H1 (cell line): ENCODE measurements at regions of chr14 and their contacts with region 1.

Region 1: DNA sequence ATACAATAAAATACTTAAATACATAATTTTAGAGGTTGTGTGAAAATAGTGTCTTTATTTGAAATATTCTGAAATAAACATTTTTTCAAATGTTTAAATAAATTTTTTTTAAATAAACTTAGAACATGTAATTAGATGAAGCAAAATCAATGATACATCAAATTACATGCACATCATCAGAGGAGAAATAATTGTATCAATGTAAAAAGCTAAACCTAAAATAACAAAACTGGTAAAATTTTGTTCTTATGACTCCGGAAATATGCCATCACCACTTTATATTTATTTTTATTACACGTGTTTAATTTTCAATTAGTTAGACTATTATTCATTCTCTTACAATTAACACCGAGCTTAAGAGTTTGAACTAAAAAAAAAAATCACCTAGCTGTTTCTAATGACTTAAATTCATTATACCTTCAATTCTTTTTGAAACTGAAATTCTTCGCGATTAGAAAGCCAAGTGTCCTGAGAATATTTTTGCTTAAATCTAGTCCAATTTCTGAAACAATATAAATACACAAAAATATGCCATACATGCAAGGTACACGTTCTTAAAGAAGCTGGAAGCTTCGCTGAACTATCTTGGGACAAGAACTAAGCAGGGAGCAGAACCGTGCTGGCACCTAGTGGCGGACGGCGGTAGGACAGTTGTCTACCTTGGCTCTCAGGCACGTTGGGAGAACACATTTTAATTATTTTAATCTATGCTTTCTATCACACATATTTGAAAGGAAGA is 230.5 kb downstream of the SLC25A21 start:
- DNase-seq: peak; percentile 27 to 92
- H3K4me3 ChIP-seq: no peak overlapping the region
- H3K27ac ChIP-seq: no peak overlapping the region
- H3K4me1 ChIP-seq: no peaks in the 10 kb centered on the region
- H3K27me3 ChIP-seq: no peaks in the 10 kb centered on the region
- CTCF ChIP-seq: peak; percentile 86 to 93 (median 91)
- EP300 ChIP-seq: no peak
- POLR2A ChIP-seq: no peak
- RAD21 ChIP-seq: peak; percentile 96 to 98

Region 2: DNA sequence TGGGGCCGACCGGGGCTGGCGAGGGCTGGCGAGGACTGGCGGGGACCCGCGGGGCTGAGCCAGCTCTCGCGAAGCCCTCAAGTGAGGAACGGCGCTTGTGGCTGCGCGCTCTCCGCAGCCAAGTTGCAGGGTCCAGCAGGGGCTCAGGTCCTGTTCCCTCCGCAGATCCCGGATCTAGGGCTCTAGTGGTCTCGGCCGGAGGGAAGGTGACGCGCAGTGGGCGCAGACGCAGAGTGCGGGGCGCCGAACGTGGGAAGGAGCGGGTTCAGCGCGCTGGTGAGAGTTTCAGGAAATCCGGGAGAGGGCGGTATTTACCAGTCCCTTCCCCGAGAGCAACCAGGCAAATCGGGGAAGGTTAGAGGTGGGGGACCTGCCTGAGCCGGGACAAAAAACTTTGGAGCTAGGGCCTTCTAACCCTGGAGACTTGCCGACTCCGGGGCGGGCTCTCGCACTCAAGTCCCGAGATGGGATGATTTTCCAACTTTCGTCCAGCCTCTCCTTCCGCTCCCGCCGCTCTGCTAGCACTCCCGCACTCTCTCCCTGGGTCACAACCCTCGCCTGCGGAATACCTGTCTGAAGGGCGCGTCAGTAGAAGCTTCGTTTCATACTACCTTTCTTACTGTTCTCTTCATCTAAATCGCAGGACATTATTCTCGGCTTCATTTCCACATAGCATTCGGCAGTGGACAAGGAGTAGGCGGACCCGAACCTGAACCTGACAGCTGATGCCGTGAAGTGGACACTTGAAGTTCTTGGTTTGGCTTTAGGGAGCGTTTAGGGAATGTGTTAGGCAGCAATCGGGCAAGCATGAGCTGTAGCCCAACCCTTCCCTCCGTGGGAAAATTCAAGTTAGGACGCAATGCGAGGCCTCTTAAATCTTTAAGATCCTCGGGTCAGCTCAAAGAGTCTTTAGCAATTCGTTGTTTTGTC is 293.9 kb before region 1 on chr14:
- CTCF ChIA-PET with region 1: interaction called, 82 read pairs
- POLR2A ChIA-PET with region 1: no interaction called
- DNase-seq: peak in 1 of 2 experiments; percentile 80
- H3K4me3 ChIP-seq: peak overlapping the region; percentile 19 to 64 (median 57); a peak in 7 of 8 replicates
- H3K27ac ChIP-seq: no peak overlapping the region
- H3K4me1 ChIP-seq: peaks cover 0 to 15% (median 7%) of the 10 kb centered on the region in 4 experiments; a peak in 6 of 7 replicates
- H3K27me3 ChIP-seq: peaks cover 73 to 85% (median 82%) of the 10 kb centered on the region in 4 experiments
- CTCF ChIP-seq: peak; percentile 63 to 67 (median 64)
- EP300 ChIP-seq: no peak
- POLR2A ChIP-seq: no peak
- RAD21 ChIP-seq: peak; percentile 75 to 77

Region 3: GRCh38 chr14:36747411-36748184 is 194.4 kb before region 1 on chr14:
- CTCF ChIA-PET with region 1: interaction called, 13 read pairs
- POLR2A ChIA-PET with region 1: no interaction called
- DNase-seq: no peak
- H3K4me3 ChIP-seq: no peak overlapping the region
- H3K27ac ChIP-seq: no peak overlapping the region
- H3K4me1 ChIP-seq: peaks cover 0 to 2% (median 0%) of the 10 kb centered on the region in 4 experiments; a peak in 1 of 7 replicates
- H3K27me3 ChIP-seq: no peaks in the 10 kb centered on the region
- CTCF ChIP-seq: peak; percentile 21 to 60 (median 41)
- EP300 ChIP-seq: no peak
- POLR2A ChIP-seq: no peak
- RAD21 ChIP-seq: peak; percentile 8 to 37; a peak in 1 of 4 replicates

Region 4: GRCh38 chr14:36784541-36784940 is 157.4 kb before region 1 on chr14:
- CTCF ChIA-PET with region 1: interaction called, 10 read pairs
- POLR2A ChIA-PET with region 1: no interaction called
- DNase-seq: no peak
- H3K4me3 ChIP-seq: no peak overlapping the region
- H3K27ac ChIP-seq: no peak overlapping the region
- H3K4me1 ChIP-seq: no peaks in the 10 kb centered on the region
- H3K27me3 ChIP-seq: no peaks in the 10 kb centered on the region
- CTCF ChIP-seq: no peak
- EP300 ChIP-seq: no peak
- POLR2A ChIP-seq: no peak
- RAD21 ChIP-seq: no peak

Region 5: DNA sequence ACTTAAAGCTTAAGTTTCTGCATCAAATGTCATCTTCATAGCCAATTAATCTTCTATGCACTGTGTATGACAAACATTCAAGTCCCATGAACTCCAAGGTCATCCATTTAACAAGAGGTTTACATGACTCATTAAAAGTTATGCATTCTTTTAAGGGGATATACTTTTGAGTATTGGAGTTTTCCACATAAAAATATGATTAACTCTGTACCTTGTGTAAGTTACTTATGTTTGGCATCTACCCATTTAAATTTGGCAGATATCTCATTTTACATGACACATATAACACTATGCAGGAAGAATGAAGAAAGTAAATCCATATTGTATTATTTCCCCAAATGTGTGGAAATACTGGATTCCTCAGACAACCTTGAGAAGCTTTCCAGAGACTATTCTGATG is 40.1 kb before region 1 on chr14:
- CTCF ChIA-PET with region 1: no interaction called
- POLR2A ChIA-PET with region 1: no interaction called
- DNase-seq: no peak
- H3K4me3 ChIP-seq: no peak overlapping the region
- H3K27ac ChIP-seq: no peak overlapping the region
- H3K4me1 ChIP-seq: no peaks in the 10 kb centered on the region
- H3K27me3 ChIP-seq: no peaks in the 10 kb centered on the region
- CTCF ChIP-seq: no peak
- EP300 ChIP-seq: no peak
- POLR2A ChIP-seq: no peak
- RAD21 ChIP-seq: no peak

Region 6: DNA sequence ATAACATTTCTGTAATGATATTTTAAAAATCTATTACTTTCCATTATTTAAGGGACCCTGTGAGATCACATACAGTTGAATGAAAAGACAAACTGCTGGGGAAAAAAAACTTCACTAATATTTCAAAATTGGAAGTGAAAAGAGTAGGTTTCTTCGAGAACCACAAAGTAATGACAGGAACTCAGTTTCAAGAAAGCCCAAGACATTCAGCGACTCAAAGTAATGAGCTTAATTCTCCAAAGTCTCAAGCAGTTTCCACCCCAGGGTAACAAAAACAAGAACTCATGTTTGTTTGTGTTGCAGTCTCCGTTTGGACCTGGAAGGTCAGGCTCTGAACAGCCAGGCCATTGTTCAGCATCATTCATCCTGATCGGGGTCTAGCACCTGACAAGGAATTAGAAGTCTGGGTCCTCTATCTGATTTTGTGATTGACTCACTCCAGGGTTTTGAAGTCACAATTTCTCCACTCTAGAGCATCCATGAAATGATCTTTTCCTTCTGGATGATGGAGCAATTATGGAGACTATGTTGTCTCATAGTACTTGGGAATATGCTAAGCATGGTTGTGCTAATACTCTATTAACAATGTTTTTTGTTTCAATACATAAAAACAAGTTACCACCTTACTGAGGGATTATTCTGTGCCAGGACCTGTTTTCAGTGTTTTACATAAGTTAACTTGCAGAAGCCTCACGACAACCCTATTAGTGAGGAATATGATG is 103.5 kb after region 1 on chr14:
- CTCF ChIA-PET with region 1: no interaction called
- POLR2A ChIA-PET with region 1: no interaction called
- DNase-seq: no peak
- H3K4me3 ChIP-seq: no peak overlapping the region
- H3K27ac ChIP-seq: no peak overlapping the region
- H3K4me1 ChIP-seq: no peaks in the 10 kb centered on the region
- H3K27me3 ChIP-seq: no peaks in the 10 kb centered on the region
- CTCF ChIP-seq: no peak
- EP300 ChIP-seq: no peak
- POLR2A ChIP-seq: no peak
- RAD21 ChIP-seq: no peak

Region 7: GRCh38 chr14:37150414-37150813 is 208.5 kb after region 1 on chr14:
- CTCF ChIA-PET with region 1: interaction called, 19 read pairs
- POLR2A ChIA-PET with region 1: no interaction called
- DNase-seq: no peak
- H3K4me3 ChIP-seq: no peak overlapping the region
- H3K27ac ChIP-seq: no peak overlapping the region
- H3K4me1 ChIP-seq: no peaks in the 10 kb centered on the region; a peak in 1 of 7 replicates
- H3K27me3 ChIP-seq: no peaks in the 10 kb centered on the region
- CTCF ChIP-seq: peak in 2 of 3 experiments; percentile 26 to 58; a peak in 2 of 4 replicates
- EP300 ChIP-seq: no peak
- POLR2A ChIP-seq: no peak
- RAD21 ChIP-seq: peak; percentile 45 to 46; a peak in 3 of 4 replicates